Spleen (tissue), 13 donors: ENCODE measurements at regions of chr3 and their contacts with region 1.

Region 1: DNA sequence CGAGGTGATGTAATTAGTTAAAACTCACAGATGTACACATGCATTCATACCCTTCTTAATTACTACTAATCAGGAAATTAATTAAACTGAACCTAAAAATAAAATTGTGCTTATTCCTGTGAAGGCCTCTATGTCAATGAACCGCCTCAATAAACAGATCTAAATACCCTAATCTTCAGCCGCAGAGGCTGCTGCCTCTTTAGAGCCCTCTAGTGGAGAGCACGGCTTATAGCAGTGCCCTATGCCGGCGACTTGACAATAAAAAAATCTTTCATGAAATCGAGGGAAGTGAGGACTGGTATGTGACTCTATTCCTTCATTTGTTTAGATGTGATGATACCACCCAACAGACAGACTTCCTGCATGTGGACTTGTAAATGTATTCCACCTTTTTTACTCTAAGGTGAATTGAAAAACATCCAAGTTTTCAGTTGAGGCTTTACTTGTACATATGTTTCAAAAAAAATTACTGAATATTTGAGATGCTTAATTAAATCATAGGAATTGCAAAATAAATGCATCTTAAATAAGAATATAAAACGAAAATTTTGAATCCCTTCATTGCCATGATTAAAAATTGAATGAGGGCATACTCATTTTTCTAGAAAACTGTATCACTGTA is 8.3 kb upstream of the EPHA3 start:
- DNase-seq: no peak
- H3K4me3 ChIP-seq: no peak overlapping the region
- H3K27ac ChIP-seq: no peak overlapping the region
- H3K4me1 ChIP-seq: no peaks in the 10 kb centered on the region
- H3K27me3 ChIP-seq: no peaks in the 10 kb centered on the region
- CTCF ChIP-seq: peak; percentile 60 to 88 (median 79)
- POLR2A ChIP-seq: no peak

Region 2: DNA sequence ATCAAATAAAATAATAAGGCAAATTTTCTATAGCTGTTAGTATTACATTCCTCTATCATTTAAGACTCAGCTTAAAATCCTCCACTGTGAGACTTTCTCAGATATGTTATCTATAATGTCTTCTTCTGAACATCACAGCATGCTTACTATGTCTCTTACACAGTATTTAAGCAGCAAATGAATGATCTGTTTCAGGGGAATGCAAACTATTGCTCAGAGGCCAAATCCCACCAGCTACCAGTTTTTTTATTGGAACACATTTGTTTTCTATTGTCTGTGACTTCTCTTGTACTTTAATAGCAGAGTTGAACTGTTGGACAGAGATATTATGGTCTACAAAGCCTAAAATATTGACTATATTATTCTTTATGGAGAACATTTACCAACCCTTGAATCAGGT is 889.7 kb before region 1 on chr3:
- intact Hi-C with region 1: loop called (anchors 5 kb)
- DNase-seq: no peak
- H3K4me3 ChIP-seq: no peak overlapping the region
- H3K27ac ChIP-seq: no peak overlapping the region
- H3K4me1 ChIP-seq: no peaks in the 10 kb centered on the region
- H3K27me3 ChIP-seq: no peaks in the 10 kb centered on the region
- CTCF ChIP-seq: no peak
- POLR2A ChIP-seq: no peak

Region 3: GRCh38 chr3:88742106-88742505 is 357.0 kb before region 1 on chr3:
- intact Hi-C with region 1: no loop called
- DNase-seq: no peak
- H3K4me3 ChIP-seq: no peak overlapping the region
- H3K27ac ChIP-seq: no peak overlapping the region
- H3K4me1 ChIP-seq: no peaks in the 10 kb centered on the region
- H3K27me3 ChIP-seq: no peaks in the 10 kb centered on the region
- CTCF ChIP-seq: no peak
- POLR2A ChIP-seq: no peak